ENCODE measurements at regions of chr10 and their contacts with region 1.

Region 1: GRCh38 chr10:64430690-64431323 is 909.6 kb downstream of the REEP3 start:
- DNase-seq: peak; percentile 57 to 67
- H3K4me3 ChIP-seq: no peak overlapping the region
- H3K4me3 Mint-ChIP-seq: no peak overlapping the region
- H3K27ac Mint-ChIP-seq: no peak overlapping the region
- H3K4me1 ChIP-seq: no peaks in the 10 kb centered on the region
- H3K4me1 Mint-ChIP-seq: no peaks in the 10 kb centered on the region
- H3K27me3 ChIP-seq: no peaks in the 10 kb centered on the region
- H3K27me3 Mint-ChIP-seq: no peaks in the 10 kb centered on the region
- CTCF ChIP-seq: peak; percentile 50 to 75

Region 2: GRCh38 chr10:64648915-64649314 is 218.1 kb after region 1 on chr10:
- CTCF ChIA-PET with region 1: no interaction called
- POLR2A ChIA-PET with region 1: no interaction called
- intact Hi-C with region 1: loop called (anchors 5 kb)
- DNase-seq: peak; percentile 49 to 54
- H3K4me3 ChIP-seq: no peak overlapping the region
- H3K4me3 Mint-ChIP-seq: no peak overlapping the region
- H3K27ac Mint-ChIP-seq: no peak overlapping the region
- H3K4me1 ChIP-seq: no peaks in the 10 kb centered on the region
- H3K4me1 Mint-ChIP-seq: no peaks in the 10 kb centered on the region
- H3K27me3 ChIP-seq: no peaks in the 10 kb centered on the region
- H3K27me3 Mint-ChIP-seq: peaks cover 6% of the 10 kb centered on the region
- CTCF ChIP-seq: peak; percentile 22 to 49

Measured in Caco-2 (cell line).